ENCODE measurements at regions of chr15 and their contacts with region 1.

Region 1: GRCh38 chr15:64731012-64731806 is 44.2 kb downstream of the RBPMS2 start:
- DNase-seq: peak; percentile 94
- H3K4me3 Mint-ChIP-seq: no peak overlapping the region
- H3K27ac Mint-ChIP-seq: no peak overlapping the region
- H3K4me1 Mint-ChIP-seq: peaks cover 3% of the 10 kb centered on the region
- H3K27me3 Mint-ChIP-seq: peaks cover 3% of the 10 kb centered on the region

Region 2: GRCh38 chr15:64162870-64163658 is 568.1 kb before region 1 on chr15 and contains the start of gene PPIB:
- CTCF ChIA-PET with region 1: no interaction called
- intact Hi-C with region 1: loop called (anchors 2 kb)
- DNase-seq: peak; percentile 98
- H3K4me3 Mint-ChIP-seq: peak within 1 kb of the TSS; percentile 80
- H3K27ac Mint-ChIP-seq: peak within 1 kb of the TSS; percentile 86
- H3K4me1 Mint-ChIP-seq: peaks cover 42% of the 10 kb centered on the region
- H3K27me3 Mint-ChIP-seq: no peaks in the 10 kb centered on the region
- total RNA-seq, gene PPIB: 187 to 202 TPM

Region 3: DNA sequence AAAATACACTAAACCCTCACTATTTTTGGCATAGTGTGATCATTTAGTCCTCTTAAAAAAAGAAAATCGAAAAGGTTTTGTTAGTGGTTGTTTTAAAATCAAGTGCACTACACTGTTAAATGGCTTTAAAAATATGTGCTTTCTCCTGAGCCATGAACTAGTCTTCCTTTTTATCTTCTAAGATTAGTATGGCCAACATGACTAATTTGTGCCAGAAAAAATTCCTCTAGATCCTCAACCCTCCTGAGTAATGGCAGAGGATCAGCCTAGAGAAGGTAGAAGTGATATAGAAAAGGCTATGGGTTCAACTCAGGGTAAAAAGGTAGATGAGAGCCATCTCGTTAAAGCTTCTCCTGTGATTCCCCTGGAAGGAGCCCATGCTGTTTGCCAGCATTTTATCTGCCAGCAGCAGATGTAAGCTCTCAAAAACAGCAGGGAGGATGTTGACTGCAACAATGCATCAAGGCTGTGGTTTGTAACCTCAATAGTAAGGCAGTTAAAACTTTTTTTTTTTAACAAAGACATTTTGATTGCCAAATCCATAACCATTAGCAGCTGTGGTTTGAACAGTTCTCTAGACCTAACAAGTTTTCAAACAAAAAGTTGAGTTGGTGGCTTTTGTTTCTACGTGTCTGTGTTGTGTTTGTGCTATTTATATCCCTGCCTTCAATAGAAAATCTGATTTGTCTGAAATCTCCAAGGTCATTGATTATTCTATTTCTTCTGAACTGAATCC is 301.0 kb before region 1 on chr15:
- CTCF ChIA-PET with region 1: interaction called, 11 read pairs
- intact Hi-C with region 1: loop called (anchors 1 kb)
- DNase-seq: peak; percentile 50
- H3K4me3 Mint-ChIP-seq: no peak overlapping the region
- H3K27ac Mint-ChIP-seq: peak overlapping the region; percentile 76
- H3K4me1 Mint-ChIP-seq: peaks cover 45% of the 10 kb centered on the region
- H3K27me3 Mint-ChIP-seq: no peaks in the 10 kb centered on the region

Region 4: DNA sequence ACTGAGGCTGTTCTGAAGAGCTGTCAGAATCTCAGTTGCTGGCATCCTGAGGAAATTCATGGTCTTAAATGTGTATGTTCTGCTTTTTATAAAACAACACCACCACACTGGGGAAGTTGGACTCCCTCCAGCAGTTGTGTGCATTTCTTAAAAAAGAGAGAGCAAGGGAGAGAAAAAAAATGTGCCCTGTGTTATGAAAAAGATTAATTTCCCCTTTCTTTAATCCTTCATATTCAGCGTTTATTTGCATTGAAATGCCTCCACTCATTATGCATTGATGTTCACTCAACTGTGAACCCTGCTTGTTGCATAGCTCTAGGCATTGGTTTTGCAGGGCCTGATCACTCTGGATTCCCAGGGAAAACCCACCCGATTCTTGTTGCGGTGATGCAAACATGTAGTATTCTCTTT is 275.2 kb before region 1 on chr15:
- CTCF ChIA-PET with region 1: no interaction called
- intact Hi-C with region 1: no loop called
- DNase-seq: no peak
- H3K4me3 Mint-ChIP-seq: no peak overlapping the region
- H3K27ac Mint-ChIP-seq: no peak overlapping the region
- H3K4me1 Mint-ChIP-seq: peaks cover 53% of the 10 kb centered on the region
- H3K27me3 Mint-ChIP-seq: no peaks in the 10 kb centered on the region

Region 5: DNA sequence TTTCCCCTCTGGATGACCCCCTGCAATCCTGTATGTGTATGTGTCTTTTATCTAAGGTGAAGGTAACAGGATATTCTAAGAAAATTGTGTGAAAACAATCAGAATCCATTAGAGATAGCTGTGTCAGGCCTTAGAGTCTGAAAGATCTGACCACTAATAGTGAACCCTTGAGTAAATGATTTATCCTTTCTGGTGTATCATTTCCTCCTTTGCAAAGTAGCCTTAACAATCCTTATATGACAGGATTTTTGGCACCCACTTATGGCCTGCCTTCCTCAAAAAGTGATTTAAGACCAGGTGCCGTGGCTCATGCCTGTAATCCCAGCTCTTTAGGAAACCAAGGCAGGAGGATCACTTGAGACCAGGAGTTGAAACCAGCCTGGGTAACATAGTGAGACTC is 66.0 kb before region 1 on chr15:
- CTCF ChIA-PET with region 1: no interaction called
- intact Hi-C with region 1: no loop called
- DNase-seq: no peak
- H3K4me3 Mint-ChIP-seq: no peak overlapping the region
- H3K27ac Mint-ChIP-seq: no peak overlapping the region
- H3K4me1 Mint-ChIP-seq: peaks cover 11% of the 10 kb centered on the region
- H3K27me3 Mint-ChIP-seq: no peaks in the 10 kb centered on the region

Region 6: DNA sequence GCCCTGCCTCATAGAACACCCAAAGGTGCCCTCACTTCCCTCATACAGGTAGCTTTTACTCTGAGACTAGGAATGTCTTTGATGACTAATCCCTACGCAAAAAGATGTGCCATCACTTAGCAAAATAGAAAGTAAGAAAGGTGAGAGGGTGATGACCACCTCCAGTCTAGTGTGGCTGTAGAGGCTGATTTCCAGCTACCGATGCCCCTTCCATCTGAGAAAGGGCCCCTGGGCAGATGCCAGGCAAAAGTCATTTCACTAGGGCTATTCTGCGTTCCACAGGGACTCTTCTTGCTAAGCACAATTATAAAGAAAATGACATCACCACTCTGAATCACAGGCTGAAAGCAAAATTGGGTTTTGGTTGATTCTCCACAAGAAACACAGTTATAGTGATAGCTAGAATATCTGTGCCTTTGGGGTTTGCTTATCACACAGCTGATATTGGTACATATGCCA is 33.3 kb before region 1 on chr15:
- CTCF ChIA-PET with region 1: interaction called, 11 read pairs
- intact Hi-C with region 1: no loop called
- DNase-seq: peak; percentile 46
- H3K4me3 Mint-ChIP-seq: no peak overlapping the region
- H3K27ac Mint-ChIP-seq: peak overlapping the region; percentile 51
- H3K4me1 Mint-ChIP-seq: peaks cover 66% of the 10 kb centered on the region
- H3K27me3 Mint-ChIP-seq: no peaks in the 10 kb centered on the region

Region 7: GRCh38 chr15:64809649-64810496 is 78.7 kb after region 1 on chr15:
- CTCF ChIA-PET with region 1: interaction called, 84 read pairs
- intact Hi-C with region 1: loop called (anchors 1 kb)
- DNase-seq: peak; percentile 86
- H3K4me3 Mint-ChIP-seq: no peak overlapping the region
- H3K27ac Mint-ChIP-seq: no peak overlapping the region
- H3K4me1 Mint-ChIP-seq: peaks cover 3% of the 10 kb centered on the region
- H3K27me3 Mint-ChIP-seq: no peaks in the 10 kb centered on the region

Region 8: GRCh38 chr15:64841258-64842095 is 110.3 kb after region 1 on chr15 and contains the start of gene PLEKHO2:
- CTCF ChIA-PET with region 1: no interaction called
- intact Hi-C with region 1: no loop called
- DNase-seq: peak; percentile 95
- H3K4me3 Mint-ChIP-seq: peak within 1 kb of the TSS; percentile 96
- H3K27ac Mint-ChIP-seq: peak within 1 kb of the TSS; percentile 83
- H3K4me1 Mint-ChIP-seq: peaks cover 60% of the 10 kb centered on the region
- H3K27me3 Mint-ChIP-seq: no peaks in the 10 kb centered on the region
- total RNA-seq, gene PLEKHO2: 12.5 to 12.7 TPM

Region 9: DNA sequence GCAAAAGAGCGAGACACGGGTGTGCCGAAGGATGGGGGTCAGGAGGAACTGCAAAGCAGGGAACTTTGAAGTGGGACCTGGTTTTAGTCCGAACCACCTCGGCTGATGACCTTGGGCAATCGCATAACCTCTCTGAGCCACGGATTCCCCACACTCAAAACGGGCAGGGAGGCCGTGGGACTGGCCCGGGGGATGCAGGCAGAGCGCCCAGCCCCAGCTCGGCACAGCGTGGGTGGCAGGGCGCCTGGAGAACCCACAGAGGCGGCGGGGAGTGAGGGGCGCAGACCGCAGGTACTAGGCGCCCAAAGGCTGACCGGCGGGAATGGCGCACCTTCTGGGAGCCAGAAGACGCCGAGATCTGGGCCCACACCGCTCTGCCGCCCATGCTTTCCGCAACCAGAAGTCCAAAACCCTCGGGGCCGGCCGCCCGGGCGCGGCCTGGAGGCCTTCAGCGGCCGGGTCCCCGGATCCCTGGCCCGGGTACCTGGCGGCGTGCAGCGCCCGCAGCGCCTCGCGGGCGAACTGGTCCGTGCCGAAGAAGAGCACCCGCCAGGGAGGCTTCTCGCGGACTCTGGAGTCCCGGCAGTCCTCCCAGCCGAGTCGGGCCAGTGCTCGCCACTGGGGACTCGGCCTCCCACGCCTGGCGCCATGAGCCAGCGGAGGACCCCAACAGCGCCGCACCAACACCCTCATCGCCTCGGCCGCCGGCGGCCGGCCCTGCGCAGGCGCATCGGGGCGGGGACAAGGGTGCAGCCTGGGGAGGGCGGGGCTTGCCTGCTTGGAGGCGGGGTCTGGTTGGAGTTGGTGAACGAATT is 297.9 kb after region 1 on chr15 and contains the start of gene MTFMT:
- CTCF ChIA-PET with region 1: no interaction called
- intact Hi-C with region 1: loop called (anchors 1 kb)
- DNase-seq: peak; percentile 95
- H3K4me3 Mint-ChIP-seq: peak within 1 kb of the TSS; percentile 87
- H3K27ac Mint-ChIP-seq: peak within 1 kb of the TSS; percentile 7
- H3K4me1 Mint-ChIP-seq: peaks cover 21% of the 10 kb centered on the region
- H3K27me3 Mint-ChIP-seq: peaks cover 8% of the 10 kb centered on the region
- total RNA-seq, gene MTFMT: 15.1 to 17.1 TPM

Measured in activated naive CD4-positive, alpha-beta T cell treated with anti-CD3 and anti-CD28 coated beads for 36 hours (primary cell).